Activated CD4-positive, alpha-beta T cell treated with anti-CD3 and anti-CD28 coated beads for 36 hours (primary cell): ENCODE measurements at regions of chr9 and their contacts with region 1.

Region 1: DNA sequence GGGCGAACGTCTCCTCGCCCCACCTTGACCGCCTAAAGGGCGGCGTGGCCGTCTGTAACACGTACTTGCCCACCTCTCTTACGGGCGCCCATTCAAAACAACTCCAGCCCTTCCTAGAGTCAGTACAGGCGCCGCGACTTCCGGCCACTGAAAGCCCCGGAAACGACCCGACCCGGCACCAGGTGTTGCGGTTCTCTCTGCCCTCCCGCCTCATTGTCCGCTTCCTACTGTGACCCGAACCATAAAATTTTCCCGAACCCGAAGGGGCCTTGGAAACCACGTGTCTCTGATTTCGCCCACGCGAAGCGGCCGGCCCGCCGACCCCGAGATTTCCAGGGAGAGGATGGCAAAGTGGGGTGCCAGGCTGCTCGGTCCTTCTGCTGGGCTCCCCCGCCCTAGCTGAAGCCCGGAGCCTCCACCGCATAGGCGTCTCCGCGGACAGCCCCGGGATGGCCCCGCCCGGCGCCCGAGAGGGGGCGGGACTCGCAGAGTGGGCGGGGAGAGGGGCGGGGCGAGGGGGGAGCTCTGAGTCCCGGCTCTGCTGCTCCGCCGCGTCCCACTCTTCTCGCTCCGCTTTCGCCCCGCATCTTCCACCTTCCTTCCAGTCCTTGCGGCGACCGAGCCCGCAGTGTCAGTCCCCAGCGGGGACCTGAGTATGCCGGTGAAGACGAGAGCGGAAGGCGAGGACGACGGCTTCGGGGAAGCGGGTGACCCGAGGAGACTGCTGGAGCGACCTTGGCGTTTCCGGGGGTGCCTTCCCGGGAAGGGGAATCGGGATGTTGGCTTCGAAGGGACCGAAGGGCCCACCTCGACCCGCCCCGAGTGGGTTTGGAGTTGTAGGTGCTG is 684 bp upstream of the PTGES2 start:
- DNase-seq: peak; percentile 90
- ATAC-seq: peak; percentile 84
- H3K4me3 Mint-ChIP-seq: peak overlapping the region; percentile 96
- H3K27ac Mint-ChIP-seq: peak overlapping the region; percentile 96
- H3K4me1 Mint-ChIP-seq: peaks cover 29% of the 10 kb centered on the region
- H3K27me3 Mint-ChIP-seq: peaks cover 2% of the 10 kb centered on the region

Region 2: DNA sequence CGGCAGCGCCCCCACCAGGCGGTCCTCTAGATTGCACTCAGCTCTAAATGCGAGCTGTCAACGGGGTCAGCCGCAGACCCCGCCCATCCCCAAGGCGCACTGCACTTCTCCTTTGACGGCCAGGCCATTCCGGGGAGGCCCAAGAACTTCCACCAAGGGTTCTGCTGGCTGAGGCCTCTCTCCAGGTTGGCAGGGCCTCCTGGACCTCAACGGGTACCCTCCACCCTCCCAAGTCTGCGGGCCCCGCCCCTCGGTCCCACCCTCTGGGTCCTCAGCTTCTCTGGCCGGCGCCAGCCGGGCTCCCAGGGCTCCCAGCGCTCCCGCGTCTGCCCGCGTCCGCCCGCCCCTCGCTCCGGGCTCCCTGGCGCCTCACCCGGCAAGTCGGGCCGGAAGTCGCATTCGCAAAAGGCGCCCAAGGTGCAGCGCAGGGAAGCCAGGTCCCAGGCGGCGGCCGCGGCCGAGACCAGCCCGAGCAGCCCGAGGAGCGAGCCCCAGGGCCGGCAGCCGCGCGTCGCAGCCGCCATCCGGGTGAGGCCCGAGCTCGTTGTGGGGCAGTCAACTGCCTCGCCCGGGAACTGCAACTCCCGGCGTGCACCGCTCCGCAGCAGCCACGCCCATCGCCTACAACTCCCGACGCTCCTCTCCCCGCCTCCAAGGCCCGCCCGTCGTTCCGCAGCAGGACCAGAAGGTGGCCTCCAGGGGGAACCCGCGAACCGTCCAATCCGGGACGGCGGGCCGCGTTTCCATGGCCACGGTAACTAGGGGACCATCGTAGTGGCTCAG is 393.3 kb before region 1 on chr9 and contains the start of gene TOR2A:
- CTCF ChIA-PET with region 1: no interaction called
- POLR2A ChIA-PET with region 1: no interaction called
- intact Hi-C with region 1: loop called in 1 of 2 experiments (anchors 1 kb)
- DNase-seq: peak; percentile 99
- ATAC-seq: peak; percentile 93
- H3K4me3 Mint-ChIP-seq: peak within 1 kb of the TSS; percentile 72
- H3K27ac Mint-ChIP-seq: peak within 1 kb of the TSS; percentile 73
- H3K4me1 Mint-ChIP-seq: peaks cover 12% of the 10 kb centered on the region
- H3K27me3 Mint-ChIP-seq: no peaks in the 10 kb centered on the region
- total RNA-seq, gene TOR2A: 11.3 to 14.0 TPM

Region 3: GRCh38 chr9:127937388-127938280 is 190.6 kb before region 1 on chr9 and contains the start of gene DPM2:
- CTCF ChIA-PET with region 1: no interaction called
- POLR2A ChIA-PET with region 1: no interaction called
- intact Hi-C with region 1: loop called in 1 of 2 experiments (anchors 2 kb)
- DNase-seq: peak; percentile 93
- ATAC-seq: peak; percentile 92
- H3K4me3 Mint-ChIP-seq: peak within 1 kb of the TSS; percentile 94
- H3K27ac Mint-ChIP-seq: peak within 1 kb of the TSS; percentile 93
- H3K4me1 Mint-ChIP-seq: peaks cover 34% of the 10 kb centered on the region
- H3K27me3 Mint-ChIP-seq: no peaks in the 10 kb centered on the region
- total RNA-seq, gene DPM2: 44.1 to 46.6 TPM

Region 4: DNA sequence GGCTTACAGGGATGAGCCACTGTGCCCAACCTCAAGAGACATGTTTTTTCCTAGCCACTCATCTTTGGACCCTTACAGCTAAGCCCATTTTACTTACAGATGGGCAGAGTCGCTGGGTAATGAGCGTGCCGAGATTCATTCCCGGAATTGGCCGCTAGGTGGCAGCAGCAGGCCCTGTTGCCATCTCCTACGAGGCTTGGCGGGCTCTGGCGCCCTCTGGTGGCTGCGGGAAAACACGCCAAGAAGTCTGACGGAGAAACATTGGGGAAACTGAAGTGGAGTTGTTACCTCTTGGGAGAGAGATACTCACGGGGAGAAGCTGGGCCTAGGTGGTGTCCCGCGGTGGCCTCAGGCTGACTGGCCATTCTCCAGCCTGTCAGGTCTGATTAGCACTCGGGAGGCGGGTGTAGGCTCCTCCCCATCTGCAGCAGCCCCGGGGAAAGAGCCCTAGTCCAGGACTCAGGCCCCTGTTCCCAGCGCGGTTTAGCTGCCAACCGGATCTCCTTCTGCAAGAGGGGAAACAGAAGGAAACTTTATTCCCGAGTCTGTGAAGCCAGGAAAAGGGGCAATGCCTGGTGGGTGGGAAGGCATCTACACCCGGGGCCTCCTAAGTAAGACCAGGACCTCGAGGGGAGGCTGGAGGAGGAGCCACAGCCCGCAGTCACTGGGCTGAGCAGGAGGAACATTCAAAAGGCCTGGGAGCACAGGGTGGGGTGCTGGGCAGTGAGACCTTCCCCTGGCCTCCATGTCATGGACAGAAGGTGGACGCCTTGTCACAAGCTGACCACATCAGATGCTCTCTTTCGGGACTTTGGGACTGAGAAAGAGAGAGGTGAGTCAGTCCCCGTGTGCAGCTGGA is 10.4 kb before region 1 on chr9:
- CTCF ChIA-PET with region 1: interaction called, 9 read pairs
- POLR2A ChIA-PET with region 1: no interaction called
- intact Hi-C with region 1: loop called (anchors 1 kb)
- DNase-seq: peak; percentile 99
- ATAC-seq: peak; percentile 94
- H3K4me3 Mint-ChIP-seq: no peak overlapping the region
- H3K27ac Mint-ChIP-seq: no peak overlapping the region
- H3K4me1 Mint-ChIP-seq: peaks cover 5% of the 10 kb centered on the region
- H3K27me3 Mint-ChIP-seq: no peaks in the 10 kb centered on the region

Region 5: GRCh38 chr9:128218518-128219389 is 90.5 kb after region 1 on chr9:
- CTCF ChIA-PET with region 1: no interaction called
- POLR2A ChIA-PET with region 1: no interaction called
- intact Hi-C with region 1: loop called in 1 of 2 experiments (anchors 1 kb)
- DNase-seq: peak; percentile 97
- ATAC-seq: peak; percentile 98
- H3K4me3 Mint-ChIP-seq: peak overlapping the region; percentile 71
- H3K27ac Mint-ChIP-seq: peak overlapping the region; percentile 74
- H3K4me1 Mint-ChIP-seq: peaks cover 11% of the 10 kb centered on the region
- H3K27me3 Mint-ChIP-seq: no peaks in the 10 kb centered on the region

Region 6: DNA sequence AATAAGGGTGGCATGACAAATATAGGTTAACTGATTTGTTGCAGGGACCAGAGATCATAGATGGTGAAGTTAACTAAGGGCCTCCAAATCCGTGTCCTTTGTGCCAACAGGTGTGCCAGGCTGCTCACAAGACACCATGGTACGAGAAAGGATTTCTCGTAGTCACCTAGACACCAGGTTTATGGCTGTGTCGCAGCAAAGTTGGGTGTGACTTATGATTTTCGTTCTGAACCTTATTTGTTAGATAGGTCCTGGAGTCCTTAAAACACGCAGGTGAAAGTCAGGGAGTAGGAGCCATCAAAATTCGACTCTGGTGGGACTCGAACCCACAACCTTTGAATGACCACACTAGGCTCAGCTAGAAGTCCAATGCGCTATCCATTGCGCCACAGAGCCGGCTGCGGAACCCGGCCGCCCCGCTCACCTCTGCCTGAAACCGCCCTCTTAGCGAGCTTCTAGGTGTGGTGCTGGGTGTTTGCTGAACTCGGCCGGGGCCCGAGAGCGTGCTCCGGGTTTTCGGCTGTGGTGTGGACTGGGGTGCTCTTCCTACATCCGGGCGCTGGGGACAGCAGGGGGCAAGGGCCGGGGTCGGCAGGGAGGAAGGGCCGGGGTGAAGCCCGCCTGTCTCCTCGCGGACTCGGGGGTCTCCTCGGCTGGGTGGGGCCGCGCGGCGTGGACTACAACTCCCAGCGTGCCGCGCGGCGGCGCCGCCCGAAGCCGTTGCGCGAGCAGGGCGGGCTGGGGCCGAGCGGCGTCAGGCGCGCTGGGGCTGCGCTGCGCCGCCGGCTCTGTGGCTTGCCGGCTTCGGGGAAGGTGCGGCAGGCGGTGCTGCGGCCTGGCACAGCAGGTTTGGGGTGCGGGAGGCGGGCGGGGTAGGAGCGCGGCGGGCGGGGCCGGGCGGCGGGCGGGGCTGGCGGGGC is 211.8 kb after region 1 on chr9 and contains the start of gene SLC27A4:
- CTCF ChIA-PET with region 1: no interaction called
- POLR2A ChIA-PET with region 1: no interaction called
- intact Hi-C with region 1: loop called in 1 of 2 experiments (anchors 1 kb)
- DNase-seq: peak; percentile 88
- ATAC-seq: peak; percentile 93
- H3K4me3 Mint-ChIP-seq: peak within 1 kb of the TSS; percentile 88
- H3K27ac Mint-ChIP-seq: peak within 1 kb of the TSS; percentile 83
- H3K4me1 Mint-ChIP-seq: peaks cover 6% of the 10 kb centered on the region
- H3K27me3 Mint-ChIP-seq: no peaks in the 10 kb centered on the region
- total RNA-seq, gene SLC27A4: 8.4 to 10.2 TPM

Region 7: GRCh38 chr9:128733256-128733655 is 605.0 kb after region 1 on chr9:
- CTCF ChIA-PET with region 1: no interaction called
- POLR2A ChIA-PET with region 1: no interaction called
- intact Hi-C with region 1: no loop called
- DNase-seq: peak; percentile 49
- ATAC-seq: peak; percentile 47
- H3K4me3 Mint-ChIP-seq: no peak overlapping the region
- H3K27ac Mint-ChIP-seq: no peak overlapping the region
- H3K4me1 Mint-ChIP-seq: no peaks in the 10 kb centered on the region
- H3K27me3 Mint-ChIP-seq: no peaks in the 10 kb centered on the region